WTC11 (cell line): ENCODE measurements at regions of chr2 and their contacts with region 1.

Region 1: DNA sequence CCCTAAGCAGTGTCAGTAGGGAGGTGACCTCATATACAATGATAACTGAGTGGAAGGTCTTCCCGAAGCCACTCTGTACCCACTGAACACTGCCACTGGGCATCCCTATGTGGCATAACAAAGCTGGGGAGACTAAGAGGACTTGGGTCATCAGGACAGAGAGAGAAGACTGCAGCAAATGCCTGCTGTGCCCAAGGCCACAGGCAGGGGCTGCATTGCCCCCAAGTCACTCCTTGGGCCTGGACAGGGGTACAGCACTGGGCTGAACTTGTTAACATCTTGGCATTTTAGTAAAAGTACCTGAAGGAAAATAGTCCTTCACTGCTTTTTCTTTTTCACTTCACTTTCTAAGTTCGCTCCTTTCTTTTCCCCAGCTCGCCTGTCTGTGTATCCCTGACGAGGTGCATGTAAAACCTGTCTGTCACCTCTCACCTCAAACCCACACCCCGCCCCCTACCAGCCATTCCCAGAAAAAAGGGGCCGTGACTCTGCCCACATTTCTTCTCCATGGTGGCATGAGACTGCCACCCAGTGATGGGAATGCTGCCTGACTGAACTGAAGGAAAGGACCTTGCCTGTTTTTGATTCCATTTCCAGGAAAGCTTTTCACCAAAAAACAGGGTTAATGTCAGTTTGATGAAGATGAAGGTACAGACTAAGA is 62.9 kb downstream of the MTHFD2 start:
- DNase-seq: peak; percentile 76
- ATAC-seq: peak; percentile 91
- H3K4me3 Mint-ChIP-seq: no peak overlapping the region
- H3K27ac Mint-ChIP-seq: no peak overlapping the region
- H3K4me1 Mint-ChIP-seq: peaks cover 19% of the 10 kb centered on the region
- H3K27me3 Mint-ChIP-seq: peaks cover 2% of the 10 kb centered on the region
- CTCF ChIP-seq: no peak

Region 2: GRCh38 chr2:74250189-74250631 is 11.1 kb before region 1 on chr2:
- CTCF ChIA-PET with region 1: interaction called, 36 read pairs
- POLR2A ChIA-PET with region 1: no interaction called
- DNase-seq: peak; percentile 52
- ATAC-seq: peak; percentile 85
- H3K4me3 Mint-ChIP-seq: no peak overlapping the region
- H3K27ac Mint-ChIP-seq: no peak overlapping the region
- H3K4me1 Mint-ChIP-seq: no peaks in the 10 kb centered on the region
- H3K27me3 Mint-ChIP-seq: peaks cover 7% of the 10 kb centered on the region; the same call in 1 of the 2 replicates
- CTCF ChIP-seq: peak; percentile 55